Vagina (tissue), 2 donors: ENCODE measurements at regions of chr7 and their contacts with region 1.

Region 1: DNA sequence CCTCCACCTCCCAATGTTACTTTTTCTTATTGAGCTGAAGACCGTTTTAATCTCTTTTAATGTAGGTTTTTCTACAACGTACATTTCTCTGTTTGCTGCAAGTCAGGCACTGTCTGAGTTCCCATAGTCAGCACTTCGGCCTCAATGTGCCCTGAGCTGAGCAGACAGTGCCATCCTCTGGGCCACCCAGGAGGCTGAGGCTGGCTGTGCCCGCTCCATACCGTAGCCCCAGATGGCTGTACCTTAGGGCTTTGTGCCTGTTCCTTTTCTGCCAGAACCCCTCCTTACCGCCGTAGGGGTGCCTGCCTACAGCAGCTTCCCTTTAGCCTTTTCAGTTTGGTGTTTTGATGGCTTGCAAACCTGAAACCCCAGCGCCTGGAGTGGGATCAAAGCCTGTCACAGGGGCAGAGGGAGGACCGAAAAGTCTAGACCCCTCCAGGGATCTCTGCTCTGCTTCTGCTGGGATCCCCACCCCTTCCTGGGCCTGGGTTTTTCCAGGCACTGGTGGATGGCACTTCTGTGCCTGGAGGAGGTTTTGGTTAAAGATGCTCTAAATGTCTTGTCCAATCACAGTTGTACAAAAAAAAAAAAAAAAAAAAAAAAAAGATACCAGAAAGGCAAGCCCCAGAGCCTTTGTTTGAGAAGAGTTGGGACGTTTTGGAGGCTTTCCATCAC is 9.0 kb downstream of the AGAP3 start:
- DNase-seq: no peak
- H3K4me3 ChIP-seq: no peak overlapping the region
- H3K27ac ChIP-seq: no peak overlapping the region
- H3K4me1 ChIP-seq: peaks cover 50% of the 10 kb centered on the region
- H3K27me3 ChIP-seq: no peaks in the 10 kb centered on the region
- CTCF ChIP-seq: no peak
- POLR2A ChIP-seq: no peak

Region 2: GRCh38 chr7:150466477-150466876 is 628.8 kb before region 1 on chr7:
- intact Hi-C with region 1: no loop called
- DNase-seq: no peak
- H3K4me3 ChIP-seq: no peak overlapping the region
- H3K27ac ChIP-seq: no peak overlapping the region
- H3K4me1 ChIP-seq: no peaks in the 10 kb centered on the region
- H3K27me3 ChIP-seq: no peaks in the 10 kb centered on the region
- CTCF ChIP-seq: no peak
- POLR2A ChIP-seq: no peak

Region 3: DNA sequence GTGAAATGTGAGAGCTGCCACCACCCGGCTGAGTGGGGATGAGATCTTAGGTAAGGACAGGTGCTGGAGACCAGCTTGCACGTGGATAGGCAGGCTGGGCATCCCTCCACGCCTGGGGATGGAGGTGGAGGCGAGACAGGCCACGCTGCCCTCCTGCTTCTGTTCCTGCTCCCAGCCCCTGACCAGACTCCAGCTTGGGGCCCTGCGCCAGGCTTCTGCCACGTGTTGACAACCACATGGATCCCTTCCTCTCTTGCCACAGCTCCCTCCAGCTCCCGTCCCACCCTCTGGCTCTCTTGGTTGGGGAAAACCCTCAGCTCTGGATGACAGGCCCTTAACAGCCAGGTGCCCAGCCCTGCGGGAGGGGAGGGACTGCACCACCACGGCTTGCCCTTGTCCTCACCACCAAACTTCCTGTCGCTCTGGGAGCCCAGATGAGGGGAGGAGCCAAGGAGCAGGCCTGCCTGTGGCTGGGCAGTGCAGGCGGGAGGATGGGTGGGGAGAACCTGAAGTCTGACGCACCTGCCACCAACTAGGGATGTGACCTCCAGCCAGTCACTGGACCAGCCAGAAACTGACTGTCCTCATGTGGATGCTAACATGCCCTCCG is 153.2 kb before region 1 on chr7:
- intact Hi-C with region 1: no loop called
- DNase-seq: no peak
- H3K4me3 ChIP-seq: no peak overlapping the region
- H3K27ac ChIP-seq: no peak overlapping the region
- H3K4me1 ChIP-seq: peaks cover 10% of the 10 kb centered on the region
- H3K27me3 ChIP-seq: no peaks in the 10 kb centered on the region
- CTCF ChIP-seq: no peak
- POLR2A ChIP-seq: no peak

Region 4: DNA sequence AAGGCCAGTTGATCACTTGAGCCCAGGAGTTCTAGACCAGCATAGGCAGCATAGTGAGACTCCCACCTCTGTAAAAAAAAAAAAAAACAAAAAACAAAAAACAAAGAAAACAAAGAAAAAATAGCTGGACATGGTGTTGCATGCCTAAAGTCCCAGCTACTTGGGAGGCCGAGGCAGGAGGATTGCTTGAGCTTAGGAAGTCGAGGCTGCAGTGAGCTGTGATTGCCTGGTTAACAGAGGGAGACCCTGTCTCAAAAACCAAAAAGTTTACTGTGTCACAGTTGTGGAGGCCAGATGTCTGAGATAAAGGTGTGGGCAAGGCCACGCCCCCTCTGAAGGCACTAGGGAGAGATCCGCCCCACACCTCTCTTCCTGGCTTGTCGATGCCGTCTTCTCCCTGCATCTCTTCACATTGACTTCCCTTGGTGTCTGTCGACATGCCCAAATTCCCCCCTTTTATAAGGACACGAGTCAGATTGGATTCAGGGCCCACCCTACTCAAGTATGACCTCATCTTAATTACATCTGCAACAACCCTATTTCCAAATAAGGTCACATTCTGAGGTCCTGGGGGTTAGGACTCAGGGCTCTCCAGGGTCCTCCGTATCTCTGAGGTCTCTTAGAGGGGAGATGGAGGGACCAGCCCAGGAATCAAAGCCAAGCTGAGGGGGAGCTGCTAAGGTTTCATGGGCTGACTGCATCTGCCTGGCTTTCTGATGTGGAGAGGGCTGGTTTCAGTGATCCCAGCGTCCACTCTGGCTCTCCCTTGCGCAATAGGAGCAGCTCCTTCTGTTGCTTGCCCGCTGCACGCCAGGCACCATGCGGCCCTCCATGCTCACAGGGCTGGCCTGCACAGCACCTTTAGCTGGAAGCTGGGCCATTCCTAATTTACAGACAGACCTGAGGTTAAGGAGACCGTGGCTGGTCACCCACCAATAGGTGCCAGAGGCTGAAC is 14.1 kb after region 1 on chr7:
- intact Hi-C with region 1: loop called (anchors 2 kb)
- DNase-seq: no peak
- H3K4me3 ChIP-seq: no peak overlapping the region
- H3K27ac ChIP-seq: peak overlapping the region; percentile 79
- H3K4me1 ChIP-seq: peaks cover 51% of the 10 kb centered on the region
- H3K27me3 ChIP-seq: no peaks in the 10 kb centered on the region
- CTCF ChIP-seq: no peak
- POLR2A ChIP-seq: no peak

Region 5: DNA sequence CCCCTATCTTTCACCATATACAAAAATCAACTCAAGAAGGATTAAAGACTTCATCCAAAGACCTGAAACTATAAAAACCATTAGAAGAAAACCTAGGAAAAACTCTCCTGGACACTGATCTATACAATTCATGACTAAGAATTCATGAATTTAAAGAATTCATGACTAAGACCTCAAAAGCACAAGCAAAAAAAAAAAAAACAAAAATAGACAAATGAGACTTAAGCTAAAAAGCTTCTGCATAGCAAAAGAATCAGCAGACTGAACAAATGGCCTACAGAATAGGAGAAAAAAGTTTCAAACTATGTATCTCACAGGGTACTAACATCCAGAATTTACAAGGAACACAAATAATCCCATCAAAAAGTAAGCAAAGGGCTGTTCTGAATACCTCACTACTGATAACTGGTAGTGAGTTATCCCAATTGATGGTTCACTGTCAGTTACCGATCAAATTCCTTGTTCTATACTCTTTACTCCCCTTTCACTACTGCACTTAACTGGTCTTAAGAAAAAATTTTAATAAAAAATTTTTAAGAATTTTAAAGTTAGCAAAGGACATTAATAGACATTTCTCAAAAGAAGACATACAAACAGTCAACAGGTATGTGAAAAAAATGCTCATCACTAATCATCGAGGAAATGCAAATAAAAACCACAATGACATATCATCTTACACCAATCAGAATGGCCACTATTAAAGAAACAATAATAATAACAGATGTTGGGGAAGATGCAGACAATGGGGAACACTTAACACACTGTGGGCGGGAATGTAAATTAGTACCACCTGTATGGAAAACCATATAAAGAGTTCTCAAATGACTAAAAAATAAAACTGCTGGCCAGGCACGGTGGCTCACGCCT is 1307.4 kb after region 1 on chr7:
- intact Hi-C with region 1: no loop called
- DNase-seq: no peak
- H3K4me3 ChIP-seq: no peak overlapping the region
- H3K27ac ChIP-seq: no peak overlapping the region
- H3K4me1 ChIP-seq: peaks cover 6% of the 10 kb centered on the region
- H3K27me3 ChIP-seq: no peaks in the 10 kb centered on the region
- CTCF ChIP-seq: no peak
- POLR2A ChIP-seq: no peak